ENCODE measurements at regions of chr19 and their contacts with region 1.

Region 1: GRCh38 chr19:52139252-52140031 is at the start of gene ZNF616:
- DNase-seq: peak; percentile 98
- H3K4me3 Mint-ChIP-seq: peak within 1 kb of the TSS; percentile 91
- H3K27ac Mint-ChIP-seq: peak within 1 kb of the TSS; percentile 89
- H3K4me1 Mint-ChIP-seq: peaks cover 29% of the 10 kb centered on the region
- H3K27me3 Mint-ChIP-seq: no peaks in the 10 kb centered on the region

Region 2: GRCh38 chr19:52155596-52156359 is 16.3 kb after region 1 on chr19:
- CTCF ChIA-PET with region 1: no interaction called
- DNase-seq: no peak
- H3K4me3 Mint-ChIP-seq: no peak overlapping the region
- H3K27ac Mint-ChIP-seq: no peak overlapping the region
- H3K4me1 Mint-ChIP-seq: no peaks in the 10 kb centered on the region
- H3K27me3 Mint-ChIP-seq: no peaks in the 10 kb centered on the region

Region 3: GRCh38 chr19:52237771-52238400 is 98.4 kb after region 1 on chr19:
- CTCF ChIA-PET with region 1: interaction called, 16 read pairs
- DNase-seq: peak; percentile 66
- H3K4me3 Mint-ChIP-seq: no peak overlapping the region
- H3K27ac Mint-ChIP-seq: no peak overlapping the region
- H3K4me1 Mint-ChIP-seq: no peaks in the 10 kb centered on the region
- H3K27me3 Mint-ChIP-seq: peaks cover 3% of the 10 kb centered on the region